Common myeloid progenitor, CD34-positive (primary cell): ENCODE measurements at regions of chr2 and their contacts with region 1.

Region 1: DNA sequence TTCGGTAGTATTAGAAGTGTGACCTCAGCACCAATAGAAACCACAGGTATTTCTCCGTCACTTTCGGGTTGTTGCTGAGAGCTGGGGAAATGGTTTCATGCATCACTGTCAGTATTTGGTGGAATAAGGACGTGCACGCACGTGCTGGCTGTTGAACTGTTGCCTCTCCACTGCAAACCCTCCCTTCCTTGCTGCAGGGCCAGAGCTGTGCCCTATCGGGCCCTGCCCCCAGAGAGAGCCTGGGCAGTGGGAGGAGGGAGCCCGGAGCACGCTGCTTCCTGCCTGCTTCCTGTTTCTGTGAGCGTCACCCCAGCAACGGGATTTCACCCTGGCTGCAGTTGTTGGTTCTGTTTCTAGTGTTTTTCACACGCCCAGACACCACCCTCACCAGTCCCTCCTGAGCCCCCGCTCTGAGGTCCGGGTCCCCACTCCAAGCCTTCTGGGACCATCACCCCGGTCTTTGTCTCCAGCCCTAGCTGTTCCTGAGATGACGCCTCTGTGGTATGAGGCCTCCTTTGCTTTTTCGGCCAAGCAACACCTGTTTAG is 47.4 kb downstream of the LRRFIP1 start:
- DNase-seq: peak; percentile 95 to 98 (median 97)
- H3K4me3 ChIP-seq: peak overlapping the region in 6 of 7 experiments; percentile 29 to 77 (median 56)
- H3K27ac ChIP-seq: peak overlapping the region; percentile 97 to 98
- H3K4me1 ChIP-seq: peaks cover 40 to 74% (median 68%) of the 10 kb centered on the region in 4 experiments
- H3K27me3 ChIP-seq: no peaks in the 10 kb centered on the region

Region 2: GRCh38 chr2:237474931-237475703 is 199.7 kb before region 1 on chr2:
- CTCF ChIA-PET with region 1: no interaction called
- POLR2A ChIA-PET with region 1: no interaction called
- DNase-seq: peak; percentile 61 to 83 (median 80)
- H3K4me3 ChIP-seq: peak overlapping the region; percentile 40 to 83 (median 68)
- H3K27ac ChIP-seq: peak overlapping the region; percentile 51 to 73
- H3K4me1 ChIP-seq: peaks cover 0 to 34% (median 26%) of the 10 kb centered on the region in 4 experiments
- H3K27me3 ChIP-seq: peaks cover 0 to 14% (median 10%) of the 10 kb centered on the region in 5 experiments

Region 3: GRCh38 chr2:237603718-237604362 is 71.0 kb before region 1 on chr2:
- CTCF ChIA-PET with region 1: interaction called, 27 read pairs
- POLR2A ChIA-PET with region 1: interaction called, 10 read pairs
- DNase-seq: peak; percentile 94 to 96 (median 95)
- H3K4me3 ChIP-seq: peak overlapping the region in 5 of 7 experiments; percentile 7 to 55 (median 36)
- H3K27ac ChIP-seq: peak overlapping the region; percentile 67 to 84
- H3K4me1 ChIP-seq: peaks cover 6 to 29% (median 29%) of the 10 kb centered on the region in 4 experiments
- H3K27me3 ChIP-seq: no peaks in the 10 kb centered on the region

Region 4: GRCh38 chr2:237639836-237640220 is 35.0 kb before region 1 on chr2:
- CTCF ChIA-PET with region 1: interaction called, 12 read pairs
- POLR2A ChIA-PET with region 1: no interaction called
- DNase-seq: no peak
- H3K4me3 ChIP-seq: no peak overlapping the region
- H3K27ac ChIP-seq: no peak overlapping the region
- H3K4me1 ChIP-seq: no peaks in the 10 kb centered on the region
- H3K27me3 ChIP-seq: no peaks in the 10 kb centered on the region

Region 5: DNA sequence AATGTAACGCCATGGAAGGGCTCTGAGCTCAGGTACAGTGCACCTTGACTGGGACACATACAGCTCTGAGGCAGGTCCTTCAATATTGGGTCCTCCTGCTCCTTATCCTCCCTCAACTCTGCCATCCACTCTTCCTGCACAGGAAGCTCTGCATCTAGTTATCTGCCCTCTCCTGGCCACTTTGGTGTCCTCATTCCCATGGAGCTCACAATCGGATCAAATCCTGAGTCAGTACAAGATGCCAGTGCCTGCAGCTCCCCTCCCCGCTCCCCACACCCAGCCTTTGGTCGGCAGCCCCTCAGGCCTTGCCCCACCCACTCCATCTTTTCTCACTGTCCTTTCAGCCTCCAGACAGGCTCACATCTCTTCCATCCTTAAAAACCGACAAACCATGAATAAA is 10.6 kb after region 1 on chr2:
- CTCF ChIA-PET with region 1: interaction called, 404 read pairs
- POLR2A ChIA-PET with region 1: interaction called, 78 read pairs
- DNase-seq: no peak
- H3K4me3 ChIP-seq: no peak overlapping the region
- H3K27ac ChIP-seq: no peak overlapping the region
- H3K4me1 ChIP-seq: peaks cover 19 to 57% (median 44%) of the 10 kb centered on the region in 4 experiments
- H3K27me3 ChIP-seq: no peaks in the 10 kb centered on the region

Region 6: DNA sequence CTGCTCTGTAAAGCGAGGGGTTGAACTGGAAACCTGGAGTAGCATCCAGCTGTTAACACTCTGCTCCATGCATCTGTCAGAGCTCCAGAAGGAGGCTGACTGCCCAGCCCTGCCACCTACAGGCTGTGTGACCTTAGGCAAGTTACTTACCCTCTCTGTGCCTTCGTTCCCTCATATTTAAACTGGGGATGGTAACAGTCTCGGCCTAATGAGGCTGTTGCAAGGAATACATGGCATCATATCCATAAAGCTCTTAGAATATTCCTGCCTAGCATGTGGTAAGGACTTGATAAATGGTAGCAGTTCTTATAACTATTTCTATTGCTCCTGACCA is 33.2 kb after region 1 on chr2:
- CTCF ChIA-PET with region 1: interaction called, 404 read pairs
- POLR2A ChIA-PET with region 1: interaction called, 4 read pairs
- DNase-seq: no peak
- H3K4me3 ChIP-seq: no peak overlapping the region
- H3K27ac ChIP-seq: peak overlapping the region in 1 of 2 experiments; percentile 1
- H3K4me1 ChIP-seq: peaks cover 8 to 47% (median 42%) of the 10 kb centered on the region in 4 experiments
- H3K27me3 ChIP-seq: no peaks in the 10 kb centered on the region

Region 7: GRCh38 chr2:237744613-237745249 is 69.9 kb after region 1 on chr2:
- CTCF ChIA-PET with region 1: interaction called, 160 read pairs
- POLR2A ChIA-PET with region 1: interaction called, 4 read pairs
- DNase-seq: peak; percentile 60 to 72 (median 68)
- H3K4me3 ChIP-seq: no peak overlapping the region
- H3K27ac ChIP-seq: no peak overlapping the region
- H3K4me1 ChIP-seq: peaks cover 0 to 28% (median 9%) of the 10 kb centered on the region in 4 experiments
- H3K27me3 ChIP-seq: no peaks in the 10 kb centered on the region